GM10248 (cell line): ENCODE measurements at regions of chr1 and their contacts with region 1.

Region 1: DNA sequence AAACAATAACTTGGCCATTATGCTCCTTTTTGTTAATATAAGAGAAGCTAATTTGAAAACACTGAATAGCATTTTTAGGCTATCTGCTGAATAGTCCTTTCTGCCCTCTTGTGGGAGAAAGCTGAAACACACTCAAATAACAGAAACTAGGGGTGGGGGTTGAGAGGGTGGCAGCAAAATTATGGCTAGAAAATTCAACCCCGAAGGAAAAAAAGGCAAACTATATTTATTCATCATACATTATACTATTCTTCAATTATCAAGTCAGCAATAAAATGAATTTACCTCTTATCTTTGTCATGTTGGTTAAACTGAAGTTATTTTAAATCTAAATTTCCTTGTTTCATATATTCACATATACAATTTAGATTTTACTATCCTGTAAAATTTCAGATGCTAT is 255.9 kb downstream of the FAF1 start:
- DNase-seq: peak; percentile 46
- CTCF ChIP-seq: peak; percentile 78

Region 2: GRCh38 chr1:50368179-50369012 is 335.7 kb before region 1 on chr1:
- CTCF ChIA-PET with region 1: interaction called, 14 read pairs
- POLR2A ChIA-PET with region 1: no interaction called
- DNase-seq: peak; percentile 59
- CTCF ChIP-seq: peak; percentile 65